ENCODE measurements at regions of chr13 and their contacts with region 1.

Region 1: DNA sequence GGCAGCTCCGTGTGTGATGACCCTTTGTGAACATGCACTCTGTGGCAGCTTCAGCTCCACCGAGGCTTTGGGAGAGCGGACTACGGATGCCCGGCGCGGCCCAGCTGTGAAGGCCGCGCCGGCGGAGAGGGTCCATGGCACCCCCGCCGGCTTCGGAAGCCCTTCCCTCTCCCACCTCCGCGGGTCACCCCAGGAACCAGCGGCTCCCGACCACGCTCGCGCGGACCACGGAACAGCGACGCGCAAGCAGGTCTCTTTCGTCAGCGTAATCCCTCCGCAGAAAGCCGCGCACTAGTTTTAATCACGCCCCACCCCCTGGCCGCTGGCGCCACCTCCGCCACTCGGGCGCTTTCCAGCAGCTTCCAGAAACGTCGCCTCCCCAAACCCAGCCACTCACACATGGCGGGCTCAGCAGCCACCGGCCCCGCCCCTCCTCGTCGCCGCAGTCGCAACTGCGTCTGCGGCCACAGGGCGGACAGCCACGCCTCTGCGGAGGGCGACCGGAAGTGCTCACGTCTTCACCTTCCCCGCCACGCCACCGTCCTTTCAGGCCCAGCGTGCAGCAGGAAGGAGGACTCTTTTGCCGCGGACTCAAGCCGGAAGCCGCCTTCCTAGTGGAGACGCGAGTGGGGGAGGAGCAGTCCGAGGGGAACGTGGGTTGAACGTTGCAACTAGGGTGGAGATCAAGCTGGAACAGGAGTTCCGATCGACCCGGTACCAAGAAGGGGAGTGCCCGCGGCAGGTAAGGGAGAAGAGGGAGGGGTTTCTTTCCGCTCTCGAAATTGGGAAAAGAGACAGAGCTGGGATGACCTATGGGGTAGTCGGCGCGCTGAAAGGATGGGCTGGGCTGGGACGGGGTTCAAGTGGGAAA is at the start of gene USPL1:
- DNase-seq: peak; percentile 99
- total RNA-seq, gene USPL1: 9.8 TPM

Region 2: GRCh38 chr13:30306762-30307193 is 310.8 kb before region 1 on chr13:
- intact Hi-C with region 1: loop called (anchors 5 kb)
- DNase-seq: peak; percentile 96

Region 3: DNA sequence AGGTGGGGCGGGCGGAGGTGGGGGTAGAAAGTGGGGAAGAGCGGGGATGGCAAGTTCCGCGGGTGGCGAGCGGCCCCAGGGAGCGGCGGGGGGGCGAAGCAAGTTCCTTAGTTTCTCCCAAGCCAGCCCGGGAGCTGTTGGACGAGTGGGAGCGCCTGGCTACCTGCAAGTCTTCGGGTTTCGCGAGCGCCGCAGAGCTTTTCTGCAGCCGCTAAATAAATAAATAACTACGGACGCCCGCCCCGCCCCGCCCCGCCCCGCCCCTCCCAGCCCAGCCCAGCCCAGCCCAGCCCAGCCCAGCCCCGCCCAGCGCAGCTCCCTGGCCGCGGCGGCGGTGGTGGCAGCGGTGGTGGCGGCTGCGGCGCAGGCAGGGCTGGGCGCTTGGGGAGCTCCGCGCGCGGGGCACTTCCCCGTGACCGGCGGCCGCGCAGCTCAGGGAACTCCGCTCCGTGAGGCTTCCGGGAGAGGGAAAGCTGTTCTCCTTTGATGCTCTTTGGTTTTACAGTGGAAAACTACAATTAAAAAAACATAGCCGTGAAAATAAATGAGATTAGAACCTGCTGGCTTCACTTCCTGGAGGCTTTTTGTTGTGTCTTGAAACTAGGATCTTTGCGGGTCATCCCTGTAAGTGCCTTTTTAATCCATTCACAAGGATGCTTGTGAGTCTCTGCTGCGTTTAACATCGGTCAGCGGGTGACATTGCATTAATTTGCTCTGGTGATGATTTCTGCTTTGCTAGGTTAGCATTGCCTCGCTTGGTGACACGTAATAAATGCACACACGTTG is 195.3 kb before region 1 on chr13 and contains the start of gene UBE2L5:
- intact Hi-C with region 1: loop called (anchors 5 kb)
- DNase-seq: peak; percentile 91
- total RNA-seq, gene UBE2L5: not detected

Region 4: GRCh38 chr13:30572859-30573275 is 44.7 kb before region 1 on chr13:
- intact Hi-C with region 1: loop called (anchors 5 kb)
- DNase-seq: no peak

Region 5: GRCh38 chr13:30673669-30674521 is 56.3 kb after region 1 on chr13:
- intact Hi-C with region 1: loop called (anchors 5 kb)
- DNase-seq: peak; percentile 95

Region 6: DNA sequence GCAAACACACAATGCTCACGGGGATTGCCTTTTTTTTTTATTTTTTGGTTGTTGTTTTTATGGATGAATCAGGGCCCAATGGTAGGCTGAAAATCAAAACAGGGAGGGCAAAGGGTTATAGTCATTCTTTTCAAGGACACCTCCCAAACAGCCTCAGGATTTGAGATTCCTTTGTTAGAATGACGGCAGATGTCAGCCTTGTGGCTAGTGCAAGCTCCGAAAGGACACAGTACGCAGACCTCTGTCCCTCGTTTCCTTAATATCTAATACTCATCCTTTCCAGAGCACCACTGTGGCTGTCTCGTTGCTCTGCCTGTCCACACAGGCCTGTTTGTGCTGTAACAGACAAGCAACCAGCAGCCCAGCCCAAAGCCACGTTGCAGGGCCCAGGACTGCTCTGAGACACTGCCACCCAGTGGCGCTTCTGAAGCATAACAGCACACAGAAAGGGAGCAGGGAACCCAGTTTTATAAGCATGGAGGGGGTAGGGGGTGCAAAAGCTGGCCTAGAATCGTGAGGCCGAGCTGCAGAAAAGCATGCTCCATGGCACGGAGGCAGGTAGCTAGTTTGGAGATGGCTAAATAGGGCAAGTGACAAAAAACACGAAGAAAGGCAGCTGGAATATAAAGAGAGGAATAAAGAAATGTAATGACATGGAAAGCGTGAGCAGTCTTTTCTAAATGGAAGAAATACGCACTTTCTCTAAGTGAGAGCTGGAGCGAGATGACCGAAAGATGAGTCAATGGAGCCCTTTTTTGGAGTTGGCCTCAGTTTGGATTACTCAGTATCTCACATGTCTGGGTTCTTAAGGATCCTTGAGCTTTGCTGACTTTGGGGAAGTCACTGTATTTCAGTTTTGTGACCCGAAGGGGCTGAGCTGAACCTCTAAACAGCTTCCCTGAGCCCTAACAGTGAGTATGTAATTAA is 247.8 kb after region 1 on chr13:
- intact Hi-C with region 1: loop called (anchors 10 kb)
- DNase-seq: peak; percentile 86

Region 7: GRCh38 chr13:31161828-31162590 is 544.5 kb after region 1 on chr13 and contains the start of gene HSPH1:
- intact Hi-C with region 1: loop called (anchors 5 kb)
- DNase-seq: peak; percentile 99
- total RNA-seq, gene HSPH1: 61.9 TPM